ENCODE measurements at regions of chr16 and their contacts with region 1.

Region 1: DNA sequence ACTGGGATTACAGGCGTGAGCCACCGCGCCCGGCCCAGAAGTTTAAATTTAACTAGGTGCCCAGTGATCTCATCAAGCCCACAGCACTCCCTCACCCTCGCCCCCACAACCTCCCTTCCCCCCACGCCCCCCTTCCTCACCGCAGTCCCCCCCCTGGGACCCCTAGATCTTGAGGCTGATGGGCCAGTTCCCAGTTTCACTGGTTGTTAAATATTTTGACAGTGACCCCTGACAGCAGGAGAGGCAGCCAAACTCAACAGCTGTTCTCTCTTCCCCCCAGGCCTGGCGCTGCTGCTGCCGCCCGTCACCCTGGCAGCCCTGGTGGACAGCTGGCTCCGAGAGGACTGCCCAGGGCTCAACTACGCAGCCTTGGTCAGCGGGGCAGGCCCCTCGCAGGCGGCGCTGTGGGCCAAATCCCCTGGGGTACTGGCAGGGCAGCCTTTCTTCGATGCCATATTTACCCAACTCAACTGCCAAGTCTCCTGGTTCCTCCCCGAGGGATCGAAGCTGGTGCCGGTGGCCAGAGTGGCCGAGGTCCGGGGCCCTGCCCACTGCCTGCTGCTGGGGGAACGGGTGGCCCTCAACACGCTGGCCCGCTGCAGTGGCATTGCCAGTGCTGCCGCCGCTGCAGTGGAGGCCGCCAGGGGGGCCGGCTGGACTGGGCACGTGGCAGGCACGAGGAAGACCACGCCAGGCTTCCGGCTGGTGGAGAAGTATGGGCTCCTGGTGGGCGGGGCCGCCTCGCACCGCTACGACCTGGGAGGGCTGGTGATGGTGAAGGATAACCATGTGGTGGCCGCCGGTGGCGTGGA is 15.6 kb downstream of the QPRT start:
- DNase-seq: no peak
- H3K4me3 ChIP-seq: no peak overlapping the region
- H3K27ac ChIP-seq: no peak overlapping the region
- H3K4me1 ChIP-seq: peaks cover 0 to 9% (median 7%) of the 10 kb centered on the region in 4 experiments
- H3K27me3 ChIP-seq: no peaks in the 10 kb centered on the region

Region 2: DNA sequence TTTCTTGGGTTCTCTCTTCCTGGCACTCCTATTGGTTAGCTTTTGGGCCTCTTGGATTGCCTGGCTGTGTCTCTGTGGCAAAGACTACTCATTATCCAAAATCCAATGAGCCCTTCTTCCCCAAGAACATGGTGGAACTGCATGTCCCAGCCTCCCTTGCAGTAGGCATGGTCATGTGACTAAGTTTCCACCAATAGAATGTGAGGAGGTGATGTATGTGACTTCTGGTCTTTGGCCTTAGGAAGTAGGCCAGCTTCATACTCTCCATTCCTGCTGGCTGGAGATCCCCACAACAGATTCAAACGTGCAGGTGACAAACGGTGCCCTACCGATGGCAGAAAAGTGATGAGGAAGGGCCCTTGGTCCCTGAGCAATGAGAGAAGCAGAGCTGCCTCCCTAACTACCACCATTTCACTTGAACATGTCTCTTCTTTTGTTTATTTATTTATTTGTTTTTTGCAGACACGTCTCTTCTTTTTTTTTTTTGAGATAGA is 48.8 kb before region 1 on chr16:
- CTCF ChIA-PET with region 1: interaction called, 20 read pairs
- POLR2A ChIA-PET with region 1: interaction called, 3 read pairs
- DNase-seq: peak; percentile 71 to 85 (median 82)
- H3K4me3 ChIP-seq: peak overlapping the region in 2 of 7 experiments; percentile 3 to 11
- H3K27ac ChIP-seq: peak overlapping the region in 1 of 2 experiments; percentile 65
- H3K4me1 ChIP-seq: peaks cover 9 to 58% (median 38%) of the 10 kb centered on the region in 4 experiments
- H3K27me3 ChIP-seq: no peaks in the 10 kb centered on the region

Region 3: DNA sequence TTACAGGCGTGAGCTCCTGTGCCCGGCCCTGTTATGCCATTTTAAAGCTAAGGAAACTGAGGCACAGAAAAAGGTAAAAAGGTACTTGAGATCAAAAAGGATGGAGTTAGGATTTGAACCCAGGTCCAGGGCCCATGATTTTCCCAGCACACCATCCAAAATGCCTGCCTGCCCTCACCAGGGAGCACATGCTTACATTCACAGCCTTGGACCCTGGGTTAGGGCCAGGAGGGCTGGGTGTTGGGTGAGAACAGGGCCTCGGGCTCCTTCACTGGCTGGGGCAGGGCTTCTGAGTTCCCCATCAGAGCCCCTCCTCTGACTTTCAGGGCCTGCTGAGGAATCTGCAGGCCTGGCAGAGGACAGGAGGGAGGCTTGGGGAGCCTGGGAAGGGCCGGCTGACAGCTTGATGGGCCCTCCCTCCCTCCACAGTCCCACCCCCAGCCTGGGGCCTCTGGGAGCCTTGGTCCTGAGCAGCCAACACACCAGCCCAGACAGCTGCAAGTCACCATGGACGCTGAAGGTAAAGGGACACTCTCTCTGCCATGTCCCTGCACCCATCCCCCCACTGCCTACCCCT is 15.8 kb before region 1 on chr16 and contains the start of gene QPRT:
- CTCF ChIA-PET with region 1: interaction called, 16 read pairs
- POLR2A ChIA-PET with region 1: interaction called, 3 read pairs
- DNase-seq: peak in 2 of 3 donors; percentile 43 to 66
- H3K4me3 ChIP-seq: peak within 1 kb of the TSS in 5 of 7 experiments; percentile 32 to 67 (median 58)
- H3K27ac ChIP-seq: peak within 1 kb of the TSS in 1 of 2 experiments; percentile 81
- H3K4me1 ChIP-seq: peaks cover 9 to 54% (median 47%) of the 10 kb centered on the region in 4 experiments
- H3K27me3 ChIP-seq: no peaks in the 10 kb centered on the region

Region 4: DNA sequence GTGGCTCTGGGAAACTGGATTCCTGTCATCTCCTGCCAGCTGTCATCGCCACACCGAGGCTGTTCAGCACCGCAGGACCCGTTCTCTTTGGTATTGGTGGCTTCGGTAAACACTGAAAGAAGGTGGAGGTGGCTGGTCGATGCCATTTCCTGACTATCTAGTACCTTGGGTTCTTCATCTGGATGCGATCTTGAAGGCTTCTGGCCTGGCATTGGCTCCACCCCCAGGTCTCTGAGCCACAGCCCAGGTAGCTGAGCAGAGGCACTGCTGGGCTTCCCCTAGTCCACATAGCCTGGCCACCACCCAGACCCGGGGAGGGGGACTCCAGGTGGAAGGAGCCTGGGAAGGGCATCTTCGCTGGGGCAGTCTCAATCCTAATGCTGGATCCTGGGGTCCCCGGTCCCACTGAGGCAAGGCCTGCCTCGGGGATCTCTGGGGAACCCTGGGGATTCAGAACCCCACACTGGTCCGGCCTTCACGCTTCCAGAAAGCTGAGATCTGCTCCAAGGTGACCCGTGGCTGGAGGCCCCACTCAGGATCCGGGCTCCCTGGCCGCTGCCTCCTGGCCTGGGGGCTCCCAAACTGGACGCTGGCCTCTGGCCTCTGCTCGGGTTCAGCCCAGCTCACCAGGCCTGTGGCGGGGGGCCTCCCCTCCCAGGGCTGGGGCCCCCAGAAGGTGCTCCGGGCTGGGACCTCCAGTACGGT is 49.4 kb after region 1 on chr16:
- CTCF ChIA-PET with region 1: no interaction called
- POLR2A ChIA-PET with region 1: no interaction called
- DNase-seq: no peak
- H3K4me3 ChIP-seq: peak overlapping the region in 5 of 7 experiments; percentile 17 to 89 (median 87)
- H3K27ac ChIP-seq: peak overlapping the region; percentile 98 to 99
- H3K4me1 ChIP-seq: peaks cover 5 to 68% (median 51%) of the 10 kb centered on the region in 4 experiments
- H3K27me3 ChIP-seq: no peaks in the 10 kb centered on the region